A549 (cell line): ENCODE measurements at regions of chr22 and their contacts with region 1.

Region 1: GRCh38 chr22:30423982-30424963 is 1.3 kb upstream of the MTFP1 start:
- DNase-seq: peak; percentile 95 to 99
- ATAC-seq: peak; percentile 79 to 86
- H3K4me3 ChIP-seq: peak overlapping the region; percentile 68
- H3K27ac ChIP-seq: peak overlapping the region; percentile 97
- H3K4me1 ChIP-seq: peaks cover 43% of the 10 kb centered on the region
- CTCF ChIP-seq: no peak
- EP300 ChIP-seq: no peak
- POLR2A ChIP-seq: peak; percentile 37; the same call in 1 of the 2 replicates
- RAD21 ChIP-seq: no peak

Region 2: DNA sequence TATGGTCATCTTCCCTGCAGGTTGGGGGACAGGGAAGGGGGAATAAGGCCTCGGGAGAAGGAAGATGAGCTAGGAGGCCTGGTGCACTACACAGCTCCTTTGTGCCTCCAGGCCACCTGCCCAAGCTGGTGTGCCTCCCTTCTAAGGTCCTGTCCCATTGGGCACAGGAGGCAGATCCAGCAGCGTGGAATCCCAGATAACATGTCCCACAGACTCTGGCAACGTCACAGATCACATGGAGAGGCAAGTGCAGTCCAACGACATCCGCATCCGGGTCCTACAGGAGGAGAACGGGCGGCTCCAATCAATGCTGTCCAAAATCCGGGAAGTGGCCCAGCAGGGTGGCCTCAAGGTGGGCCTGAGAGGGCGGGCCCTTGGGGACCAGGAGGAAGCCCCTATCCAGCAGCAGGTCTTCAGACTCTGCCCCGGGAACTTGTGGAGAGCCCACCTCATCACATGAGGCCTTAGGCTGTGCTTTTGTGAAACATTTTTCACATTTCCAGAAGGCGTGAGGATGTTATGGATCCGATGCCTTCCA is 48.9 kb before region 1 on chr22:
- CTCF ChIA-PET with region 1: no interaction called
- POLR2A ChIA-PET with region 1: no interaction called
- DNase-seq: no peak
- ATAC-seq: no peak
- H3K4me3 ChIP-seq: no peak overlapping the region
- H3K27ac ChIP-seq: no peak overlapping the region
- H3K4me1 ChIP-seq: no peaks in the 10 kb centered on the region
- CTCF ChIP-seq: no peak
- EP300 ChIP-seq: no peak
- POLR2A ChIP-seq: no peak
- RAD21 ChIP-seq: no peak

Region 3: GRCh38 chr22:30396871-30397655 is 27.2 kb before region 1 on chr22 and contains the start of gene SEC14L2:
- CTCF ChIA-PET with region 1: interaction called, 8 read pairs
- POLR2A ChIA-PET with region 1: interaction called, 12 read pairs
- DNase-seq: peak; percentile 33 to 55
- ATAC-seq: peak; percentile 80 to 88
- H3K4me3 ChIP-seq: peak within 1 kb of the TSS; percentile 76
- H3K27ac ChIP-seq: peak within 1 kb of the TSS; percentile 81 to 98
- H3K4me1 ChIP-seq: peaks cover 18% of the 10 kb centered on the region
- CTCF ChIP-seq: no peak
- EP300 ChIP-seq: no peak
- POLR2A ChIP-seq: peak; percentile 38; the same call in 1 of the 2 replicates
- RAD21 ChIP-seq: no peak
- polyA plus RNA-seq, gene SEC14L2: 12.5 and 12.8 TPM in 2 replicates

Region 4: DNA sequence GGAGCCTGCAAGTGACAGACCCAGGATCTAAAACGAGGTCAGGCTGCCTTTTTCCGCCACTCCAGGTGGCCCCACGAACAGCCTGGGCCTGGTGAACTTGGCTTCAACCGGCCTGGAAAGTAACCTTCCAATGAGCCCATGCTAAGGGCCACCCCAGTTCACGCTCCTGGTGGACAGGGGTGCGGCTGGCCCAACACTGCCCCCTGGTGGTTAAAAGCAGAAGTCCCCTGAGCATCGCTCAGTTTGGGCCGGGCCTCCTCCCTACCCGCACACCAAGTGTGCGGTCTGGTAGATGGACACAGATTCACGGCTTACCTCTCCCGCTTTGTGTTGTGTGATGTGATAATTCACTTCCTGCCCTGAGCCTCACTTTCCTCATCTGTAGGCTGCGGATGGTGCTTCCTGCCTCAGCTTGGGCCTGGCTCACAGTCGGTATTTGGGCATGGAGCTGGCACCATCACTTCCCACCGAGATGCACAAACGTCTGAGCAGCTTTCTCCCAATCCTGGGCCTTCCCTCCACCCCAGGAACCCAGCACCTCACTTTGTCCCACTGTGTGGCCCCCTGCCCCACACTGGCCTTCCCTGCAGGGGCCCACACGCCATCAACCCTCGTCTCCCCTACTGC is 61.2 kb after region 1 on chr22:
- CTCF ChIA-PET with region 1: interaction called, 14 read pairs
- POLR2A ChIA-PET with region 1: no interaction called
- DNase-seq: peak; percentile 61 to 84
- ATAC-seq: peak; percentile 90 to 97
- H3K4me3 ChIP-seq: no peak overlapping the region
- H3K27ac ChIP-seq: peak overlapping the region in 1 of 2 experiments; percentile 66; a peak in 3 of 6 replicates
- H3K4me1 ChIP-seq: peaks cover 18% of the 10 kb centered on the region
- CTCF ChIP-seq: peak; percentile 64
- EP300 ChIP-seq: no peak
- POLR2A ChIP-seq: no peak
- RAD21 ChIP-seq: peak; percentile 69 to 72